ENCODE measurements at regions of chr14 and their contacts with region 1.

Region 1: GRCh38 chr14:77457522-77458290 is at the starts of genes AHSA1 and VIPAS39:
- DNase-seq: peak; percentile 92
- CTCF ChIP-seq: no peak

Region 2: GRCh38 chr14:77438596-77438995 is 19.1 kb before region 1 on chr14:
- CTCF ChIA-PET with region 1: interaction called, 16 read pairs
- POLR2A ChIA-PET with region 1: no interaction called
- DNase-seq: no peak
- CTCF ChIP-seq: no peak

Region 3: GRCh38 chr14:77470192-77470870 is 12.6 kb after region 1 on chr14:
- CTCF ChIA-PET with region 1: interaction called, 27 read pairs
- POLR2A ChIA-PET with region 1: interaction called, 3 read pairs
- DNase-seq: no peak
- CTCF ChIP-seq: no peak

Region 4: GRCh38 chr14:77478796-77479195 is 21.1 kb after region 1 on chr14:
- CTCF ChIA-PET with region 1: interaction called, 25 read pairs
- POLR2A ChIA-PET with region 1: interaction called, 3 read pairs
- DNase-seq: peak; percentile 74
- CTCF ChIP-seq: no peak

Region 5: DNA sequence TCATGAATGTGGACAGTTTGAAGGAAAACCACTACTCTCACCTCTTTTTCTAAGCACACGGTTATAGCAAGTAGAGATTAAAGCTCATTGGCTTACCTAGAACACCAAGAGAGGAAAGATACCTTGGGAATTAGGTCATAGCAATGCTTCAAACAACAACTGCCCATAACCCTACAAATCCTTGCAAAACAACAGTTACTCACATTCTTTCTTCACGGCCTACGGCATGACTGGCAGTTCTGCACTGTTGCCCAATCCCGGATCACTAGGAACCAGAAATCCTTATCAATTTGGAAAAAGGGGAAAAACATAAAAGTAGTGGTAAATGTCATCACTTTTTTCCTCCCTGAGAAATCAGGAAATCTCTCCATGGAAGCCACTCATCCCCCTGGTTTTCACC is 50.5 kb after region 1 on chr14:
- CTCF ChIA-PET with region 1: interaction called, 17 read pairs
- POLR2A ChIA-PET with region 1: interaction called, 6 read pairs
- DNase-seq: no peak
- CTCF ChIP-seq: no peak

Region 6: GRCh38 chr14:77554207-77554606 is 96.5 kb after region 1 on chr14:
- CTCF ChIA-PET with region 1: interaction called, 61 read pairs
- POLR2A ChIA-PET with region 1: no interaction called
- DNase-seq: no peak
- CTCF ChIP-seq: no peak

Measured in GM10248 (cell line).